ENCODE measurements at regions of chr19 and their contacts with region 1.

Region 1: DNA sequence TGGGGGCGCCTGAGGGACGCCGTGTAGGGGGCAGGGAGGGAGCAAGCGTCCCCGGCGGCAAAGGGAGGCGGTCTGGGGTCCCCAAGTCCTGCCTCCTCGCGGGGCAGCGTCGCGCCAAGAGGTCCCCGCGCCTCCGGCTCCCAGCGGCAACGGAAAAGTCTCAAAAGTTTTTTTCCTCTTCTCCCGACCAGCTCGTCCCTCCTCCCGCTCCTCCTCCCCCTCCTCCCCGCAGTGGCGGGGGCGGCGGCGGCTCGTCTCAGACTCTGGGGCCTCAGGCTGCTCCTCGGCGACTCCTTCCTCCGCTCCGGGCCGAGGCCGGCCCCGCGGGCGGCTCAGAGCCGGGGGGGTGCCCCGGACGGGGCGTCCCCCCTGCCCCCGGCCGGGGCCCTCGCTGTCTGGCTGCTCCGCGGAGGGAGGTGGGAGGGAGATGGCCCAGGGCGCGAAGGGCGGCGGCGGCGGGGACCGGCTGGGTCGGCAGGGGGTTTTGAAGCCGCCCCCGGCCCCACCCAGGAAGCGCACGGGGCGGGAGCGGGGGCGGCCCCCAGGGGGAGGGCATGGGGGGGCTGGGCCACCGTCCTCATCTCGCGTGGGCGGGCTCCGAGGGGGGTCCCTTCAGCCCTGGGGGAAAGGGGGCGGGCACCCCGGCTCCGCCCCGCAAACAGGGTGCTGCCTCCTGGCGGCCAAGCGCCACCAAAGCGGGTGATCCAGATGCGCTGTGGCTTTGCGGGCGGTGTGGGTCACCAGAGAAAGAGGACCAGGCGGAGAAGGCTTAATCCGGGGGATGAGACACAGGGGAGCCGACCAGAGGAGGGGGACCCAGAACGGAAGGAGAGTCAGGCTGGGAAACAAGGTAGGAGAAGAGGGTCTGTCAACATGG is at the start of gene TGFB1:
- DNase-seq: peak; percentile 81
- H3K4me3 ChIP-seq: peak within 1 kb of the TSS; percentile 75 to 99 (median 90)
- H3K27ac ChIP-seq: peak within 1 kb of the TSS; percentile 70
- H3K4me1 ChIP-seq: peaks cover 12% of the 10 kb centered on the region
- H3K27me3 ChIP-seq: no peaks in the 10 kb centered on the region
- CTCF ChIP-seq: peak; percentile 92 to 96
- POLR2A ChIP-seq: peak; percentile 88
- total RNA-seq, gene TGFB1: 250 and 294 TPM in 2 replicates

Region 2: GRCh38 chr19:41206926-41207750 is 146.6 kb before region 1 on chr19:
- CTCF ChIA-PET with region 1: interaction called, 10 read pairs
- POLR2A ChIA-PET with region 1: no interaction called
- dilution Hi-C with region 1: no loop called
- intact Hi-C with region 1: loop called (anchors 1 kb)
- DNase-seq: no peak
- H3K4me3 ChIP-seq: no peak overlapping the region
- H3K27ac ChIP-seq: no peak overlapping the region
- H3K4me1 ChIP-seq: no peaks in the 10 kb centered on the region
- H3K27me3 ChIP-seq: no peaks in the 10 kb centered on the region
- CTCF ChIP-seq: no peak
- POLR2A ChIP-seq: no peak

Region 3: DNA sequence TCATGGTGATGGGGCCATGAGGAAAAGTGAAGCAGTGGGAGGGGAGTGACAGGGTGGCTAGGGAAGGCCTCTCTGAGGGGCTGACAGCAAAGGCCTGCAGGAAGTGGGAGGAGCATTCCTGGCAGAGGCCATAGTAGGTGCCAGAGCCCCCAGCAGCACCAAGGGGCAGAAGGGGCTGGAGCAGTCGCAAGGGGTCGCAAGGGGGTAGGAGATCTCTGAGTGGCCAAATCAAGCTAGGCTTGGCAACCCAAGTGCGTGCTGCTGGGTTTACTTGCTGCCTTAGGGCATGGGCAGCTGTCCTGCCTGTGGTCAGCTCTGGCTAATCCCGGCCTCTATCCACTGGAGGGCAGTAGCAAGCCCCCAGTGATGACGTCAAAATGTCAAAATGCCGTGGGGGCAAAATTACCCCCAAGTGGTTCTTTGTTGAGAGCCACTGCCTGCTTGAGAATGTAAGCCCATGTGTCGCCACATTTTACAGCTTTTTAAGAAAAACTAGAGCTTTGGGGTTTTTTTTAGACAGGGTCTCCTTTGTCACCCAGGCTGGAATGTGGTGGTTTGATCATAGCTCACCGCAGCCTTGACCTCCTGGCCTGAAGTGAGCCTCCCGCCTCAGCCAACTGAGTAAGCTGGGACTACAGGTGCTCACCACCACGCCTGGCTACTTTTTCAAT is 32.0 kb before region 1 on chr19:
- CTCF ChIA-PET with region 1: interaction called, 65 read pairs
- POLR2A ChIA-PET with region 1: interaction called, 4 read pairs
- dilution Hi-C with region 1: no loop called
- intact Hi-C with region 1: loop called (anchors 1 kb)
- DNase-seq: peak; percentile 76
- H3K4me3 ChIP-seq: no peak overlapping the region
- H3K27ac ChIP-seq: peak overlapping the region; percentile 100
- H3K4me1 ChIP-seq: peaks cover 46% of the 10 kb centered on the region
- H3K27me3 ChIP-seq: no peaks in the 10 kb centered on the region
- CTCF ChIP-seq: peak; percentile 83 to 89
- POLR2A ChIP-seq: peak; percentile 38

Region 4: DNA sequence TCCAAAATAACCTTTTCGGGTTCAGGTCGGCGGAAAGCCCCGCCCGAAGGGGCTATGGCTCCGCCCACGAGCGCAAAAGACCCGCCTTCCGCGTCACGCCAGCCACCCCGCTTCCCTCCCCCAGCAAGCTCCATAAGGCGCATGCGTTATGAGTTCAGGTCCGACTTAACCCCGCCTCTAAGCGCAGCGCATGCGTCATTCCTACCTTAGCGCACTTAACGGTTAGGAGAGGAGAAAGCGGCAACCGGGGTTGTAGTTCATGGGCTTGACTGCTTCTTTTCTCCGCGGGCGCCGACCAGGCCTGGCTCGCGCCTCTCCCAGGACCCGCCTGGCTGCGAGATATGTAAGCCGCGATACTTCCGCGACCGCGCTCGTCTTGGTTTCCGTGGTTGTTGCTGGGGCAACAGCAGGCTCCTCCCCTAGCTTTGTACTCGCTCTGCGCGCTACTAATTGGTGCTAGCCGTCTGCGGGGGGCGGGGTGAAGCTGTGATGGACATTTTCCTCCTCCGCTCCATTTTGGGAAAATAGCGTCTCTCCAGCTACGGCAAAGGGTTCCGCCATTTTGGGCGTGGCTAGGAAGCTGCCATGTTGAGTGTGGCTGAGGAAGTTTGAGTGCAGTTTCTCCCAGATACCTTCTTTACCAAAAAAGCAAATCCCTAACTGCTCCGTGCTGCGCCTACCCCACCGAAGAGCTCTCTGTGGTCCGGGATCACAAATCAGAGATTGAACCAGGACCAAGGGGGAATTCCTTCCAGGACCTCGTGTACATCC is 10.2 kb after region 1 on chr19 and contains the start of gene B9D2:
- CTCF ChIA-PET with region 1: interaction called, 35 read pairs
- POLR2A ChIA-PET with region 1: interaction called, 8 read pairs
- dilution Hi-C with region 1: no loop called
- intact Hi-C with region 1: no loop called
- DNase-seq: peak; percentile 99
- H3K4me3 ChIP-seq: peak within 1 kb of the TSS; percentile 40 to 86 (median 60)
- H3K27ac ChIP-seq: peak within 1 kb of the TSS; percentile 88
- H3K4me1 ChIP-seq: peaks cover 20% of the 10 kb centered on the region
- H3K27me3 ChIP-seq: no peaks in the 10 kb centered on the region
- CTCF ChIP-seq: no peak
- POLR2A ChIP-seq: peak; percentile 91
- total RNA-seq, gene B9D2: 12.2 and 13.6 TPM in 2 replicates

Region 5: DNA sequence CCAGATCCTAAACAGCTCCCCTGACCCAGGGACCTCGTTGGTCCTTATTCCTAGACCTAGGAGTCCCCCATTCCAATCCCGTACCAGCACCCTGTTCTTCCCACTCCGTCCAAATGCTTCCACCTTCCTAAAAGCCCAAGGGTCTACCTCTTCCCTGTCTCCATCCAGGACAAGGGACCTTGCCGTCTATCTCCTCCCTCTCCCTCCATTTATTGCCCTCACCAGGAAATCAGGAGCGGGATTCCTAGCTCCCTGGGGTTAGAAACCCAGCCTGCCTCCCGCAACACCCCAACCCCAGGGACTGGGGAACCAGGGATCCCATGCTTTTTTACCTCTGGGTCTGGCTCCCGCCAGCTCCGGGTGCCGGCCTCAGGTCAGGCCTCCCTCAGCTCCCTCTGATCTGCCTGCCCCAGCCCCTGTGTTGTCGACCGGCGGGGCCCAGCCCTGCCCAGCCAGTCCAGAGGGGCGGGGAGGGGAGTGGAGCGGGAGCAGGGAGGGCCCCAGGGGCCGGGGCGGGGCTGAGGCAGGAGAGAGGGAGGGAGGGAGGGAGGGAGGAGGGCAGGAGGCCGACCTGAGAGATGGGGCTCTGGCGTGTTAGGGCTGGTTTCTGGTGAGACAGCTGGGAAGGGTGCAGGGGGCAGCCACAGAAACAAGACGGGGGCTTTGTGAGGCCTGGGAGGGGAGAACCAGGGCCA is 73.4 kb after region 1 on chr19 and contains the start of gene B3GNT8:
- CTCF ChIA-PET with region 1: interaction called, 22 read pairs
- POLR2A ChIA-PET with region 1: no interaction called
- dilution Hi-C with region 1: no loop called
- intact Hi-C with region 1: loop called (anchors 1 kb)
- DNase-seq: peak; percentile 60
- H3K4me3 ChIP-seq: peak within 1 kb of the TSS; percentile 41 to 49 (median 41)
- H3K27ac ChIP-seq: peak within 1 kb of the TSS; percentile 62
- H3K4me1 ChIP-seq: peaks cover 25% of the 10 kb centered on the region
- H3K27me3 ChIP-seq: no peaks in the 10 kb centered on the region
- CTCF ChIP-seq: no peak
- POLR2A ChIP-seq: peak; percentile 51
- total RNA-seq, gene B3GNT8: 6.5 and 7.6 TPM in 2 replicates

Region 6: DNA sequence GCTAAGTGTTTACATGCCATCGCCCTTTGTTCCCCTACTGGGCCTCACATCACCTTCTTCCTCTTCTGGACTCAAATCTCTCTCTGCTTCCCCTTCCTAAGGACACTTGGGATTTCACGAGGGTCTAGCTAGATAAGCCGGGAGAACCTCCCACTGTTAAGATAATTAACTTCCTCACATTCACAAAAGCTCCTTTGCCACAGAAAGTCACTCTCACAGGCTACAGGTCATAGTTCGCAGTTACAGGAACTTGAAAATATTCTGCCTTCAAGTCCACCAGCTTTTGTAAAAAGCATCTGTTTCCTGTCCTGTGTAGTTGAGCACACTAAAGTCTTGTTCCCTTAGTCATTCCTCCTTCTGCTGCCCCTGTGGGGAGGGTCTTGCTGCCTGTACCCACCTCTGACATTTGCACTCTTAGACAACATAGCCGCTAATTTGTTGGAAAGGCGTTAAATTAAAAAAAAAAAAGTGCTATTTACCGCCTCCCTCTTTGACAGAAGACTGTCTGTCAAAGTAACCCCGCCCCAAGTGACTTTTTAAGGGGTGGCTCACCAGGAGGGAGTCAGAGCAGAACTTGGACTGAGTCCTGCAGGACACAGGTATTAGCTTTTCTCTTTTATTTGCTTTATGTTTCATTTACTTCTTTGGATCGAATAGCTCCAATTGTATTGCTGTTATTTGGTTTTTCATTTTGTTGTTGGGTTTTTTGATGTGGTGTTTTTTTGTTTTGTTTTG is 195.4 kb after region 1 on chr19:
- CTCF ChIA-PET with region 1: no interaction called
- POLR2A ChIA-PET with region 1: no interaction called
- dilution Hi-C with region 1: no loop called
- intact Hi-C with region 1: loop called (anchors 5 kb)
- DNase-seq: peak; percentile 89
- H3K4me3 ChIP-seq: peak overlapping the region in 2 of 3 experiments; percentile 29 to 66
- H3K27ac ChIP-seq: peak overlapping the region; percentile 92
- H3K4me1 ChIP-seq: peaks cover 38% of the 10 kb centered on the region
- H3K27me3 ChIP-seq: no peaks in the 10 kb centered on the region
- CTCF ChIP-seq: no peak
- POLR2A ChIP-seq: peak; percentile 86

Measured in endothelial cell of umbilical vein (primary cell).